ENCODE measurements at regions of chr1 and their contacts with region 1.

Region 1: GRCh38 chr1:220294846-220295301 is 22.6 kb upstream of the RAB3GAP2 start:
- DNase-seq: no peak
- ATAC-seq: no peak
- H3K4me3 Mint-ChIP-seq: no peak overlapping the region
- H3K27ac Mint-ChIP-seq: no peak overlapping the region
- H3K4me1 Mint-ChIP-seq: no peaks in the 10 kb centered on the region
- H3K27me3 Mint-ChIP-seq: peaks cover 18% of the 10 kb centered on the region
- CTCF ChIP-seq: no peak

Region 2: GRCh38 chr1:220307607-220308006 is 12.7 kb after region 1 on chr1:
- CTCF ChIA-PET with region 1: interaction called, 14 read pairs
- POLR2A ChIA-PET with region 1: no interaction called
- intact Hi-C with region 1: no loop called
- DNase-seq: no peak
- ATAC-seq: no peak
- H3K4me3 Mint-ChIP-seq: no peak overlapping the region
- H3K27ac Mint-ChIP-seq: no peak overlapping the region
- H3K4me1 Mint-ChIP-seq: no peaks in the 10 kb centered on the region
- H3K27me3 Mint-ChIP-seq: peaks cover 12% of the 10 kb centered on the region
- CTCF ChIP-seq: no peak

Measured in activated CD8-positive, alpha-beta T cell treated with anti-CD3 and anti-CD28 coated beads for 36 hours (primary cell).